Dendritic cell treated with granulocyte-macrophage colony-stimulating factor and Interleukin-4, amounts not matched to agents 40 ng/mL and 50 ng/mL, for 4 days (primary cell): ENCODE measurements at regions of chr6 and their contacts with region 1.

Region 1: DNA sequence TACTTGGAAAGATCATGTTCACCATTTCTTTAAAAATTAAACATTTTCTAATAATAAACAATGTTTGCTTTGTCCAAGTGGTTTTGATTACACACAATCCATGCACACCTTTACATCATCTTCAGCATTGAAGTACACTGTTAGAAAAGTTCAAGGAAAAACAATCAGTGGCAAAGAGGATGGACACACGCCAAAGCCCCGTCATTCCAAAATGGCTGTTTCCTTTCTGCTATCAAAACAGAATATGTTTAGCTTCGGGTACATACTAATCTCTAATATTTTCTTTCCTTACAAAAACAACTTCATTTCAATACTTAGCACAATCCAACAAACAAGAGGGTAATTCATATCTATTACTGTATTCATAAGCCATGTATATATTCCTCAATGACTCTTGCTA is 24.5 kb downstream of the REPS1 start:
- H3K4me3 Mint-ChIP-seq: no peak overlapping the region
- H3K27ac Mint-ChIP-seq: no peak overlapping the region
- H3K4me1 Mint-ChIP-seq: peaks cover 14% of the 10 kb centered on the region
- H3K27me3 Mint-ChIP-seq: no peaks in the 10 kb centered on the region

Region 2: DNA sequence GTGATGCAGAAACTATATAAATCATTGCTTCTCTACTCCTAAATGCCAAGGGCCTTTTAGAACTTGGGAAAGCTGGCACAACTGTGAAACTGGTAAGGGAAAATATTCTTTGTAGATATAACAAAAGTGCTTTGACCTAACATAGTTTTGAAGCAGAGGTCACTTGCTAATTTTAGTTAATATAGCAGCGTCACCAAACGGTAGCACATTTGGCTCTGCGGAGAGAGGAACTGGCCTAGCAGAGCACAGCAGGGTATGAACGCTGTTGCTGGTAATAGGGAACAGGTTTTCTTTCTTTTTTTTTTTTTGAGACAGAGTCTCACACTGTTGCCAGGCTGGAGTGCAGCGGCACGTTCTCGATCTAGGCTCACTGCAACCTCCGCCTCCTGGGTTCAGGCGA is 100.2 kb before region 1 on chr6:
- intact Hi-C with region 1: no loop called
- H3K4me3 Mint-ChIP-seq: no peak overlapping the region
- H3K27ac Mint-ChIP-seq: no peak overlapping the region
- H3K4me1 Mint-ChIP-seq: no peaks in the 10 kb centered on the region
- H3K27me3 Mint-ChIP-seq: no peaks in the 10 kb centered on the region

Region 3: GRCh38 chr6:138931660-138932059 is 31.9 kb before region 1 on chr6:
- intact Hi-C with region 1: loop called (anchors 2 kb)
- H3K4me3 Mint-ChIP-seq: no peak overlapping the region
- H3K27ac Mint-ChIP-seq: no peak overlapping the region
- H3K4me1 Mint-ChIP-seq: no peaks in the 10 kb centered on the region
- H3K27me3 Mint-ChIP-seq: no peaks in the 10 kb centered on the region

Region 4: GRCh38 chr6:140602431-140603248 is 1639.1 kb after region 1 on chr6:
- intact Hi-C with region 1: no loop called
- H3K4me3 Mint-ChIP-seq: no peak overlapping the region
- H3K27ac Mint-ChIP-seq: no peak overlapping the region
- H3K4me1 Mint-ChIP-seq: no peaks in the 10 kb centered on the region
- H3K27me3 Mint-ChIP-seq: no peaks in the 10 kb centered on the region